ENCODE measurements at regions of chr18 and their contacts with region 1.

Region 1: GRCh38 chr18:13611601-13612195 is 114.7 kb downstream of the FAM210A start:
- DNase-seq: no peak
- CTCF ChIP-seq: no peak

Region 2: GRCh38 chr18:13566941-13567746 is 44.6 kb before region 1 on chr18:
- in situ Hi-C with region 1: loop called (anchors 5 kb)
- DNase-seq: peak; percentile 80
- CTCF ChIP-seq: no peak

Measured in GM13976 (cell line).